ENCODE measurements at regions of chr7 and their contacts with region 1.

Region 1: GRCh38 chr7:76333511-76334101 is 25.2 kb downstream of the YWHAG start:
- DNase-seq: no peak
- ATAC-seq: no peak
- H3K4me3 Mint-ChIP-seq: no peak overlapping the region
- H3K27ac Mint-ChIP-seq: no peak overlapping the region
- H3K4me1 Mint-ChIP-seq: peaks cover 17% of the 10 kb centered on the region
- H3K27me3 Mint-ChIP-seq: no peaks in the 10 kb centered on the region

Region 2: GRCh38 chr7:76359111-76359978 is 25.7 kb after region 1 on chr7:
- CTCF ChIA-PET with region 1: interaction called, 3 read pairs
- POLR2A ChIA-PET with region 1: interaction called, 11 read pairs
- DNase-seq: peak; percentile 97
- ATAC-seq: peak; percentile 96
- H3K4me3 Mint-ChIP-seq: peak overlapping the region; percentile 98
- H3K27ac Mint-ChIP-seq: peak overlapping the region; percentile 99
- H3K4me1 Mint-ChIP-seq: peaks cover 45% of the 10 kb centered on the region
- H3K27me3 Mint-ChIP-seq: no peaks in the 10 kb centered on the region